ENCODE measurements at regions of chr20 and their contacts with region 1.

Region 1: GRCh38 chr20:24992487-24993205 is at the start of gene APMAP:
- DNase-seq: peak; percentile 91
- H3K4me3 Mint-ChIP-seq: peak within 1 kb of the TSS; percentile 97
- H3K27ac Mint-ChIP-seq: peak within 1 kb of the TSS; percentile 97
- H3K4me1 Mint-ChIP-seq: peaks cover 60% of the 10 kb centered on the region
- H3K27me3 Mint-ChIP-seq: no peaks in the 10 kb centered on the region
- CTCF ChIP-seq: no peak
- total RNA-seq, gene APMAP: 75.3 and 104 TPM in 2 replicates

Region 2: DNA sequence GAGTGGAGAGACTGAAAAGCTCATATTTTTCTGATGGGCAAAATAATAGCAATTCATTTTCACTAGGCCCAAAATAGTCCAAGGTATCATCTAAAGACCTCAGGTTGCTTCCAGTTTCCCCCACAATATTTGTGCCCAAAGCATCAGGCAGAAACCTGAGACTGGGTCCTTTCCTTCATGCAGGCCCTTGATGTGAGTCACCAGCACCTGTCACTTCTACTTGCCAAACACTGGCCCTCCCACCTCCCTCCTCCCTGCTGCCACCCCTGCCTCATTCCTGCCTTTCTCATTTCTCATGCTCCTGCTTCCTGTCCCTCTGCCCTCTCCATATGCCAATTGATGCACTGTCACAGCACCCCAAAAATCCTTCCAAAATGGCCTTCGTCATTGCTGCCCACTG is 273.9 kb before region 1 on chr20:
- CTCF ChIA-PET with region 1: no interaction called
- POLR2A ChIA-PET with region 1: no interaction called
- intact Hi-C with region 1: no loop called
- DNase-seq: no peak
- H3K4me3 Mint-ChIP-seq: no peak overlapping the region
- H3K27ac Mint-ChIP-seq: no peak overlapping the region
- H3K4me1 Mint-ChIP-seq: no peaks in the 10 kb centered on the region
- H3K27me3 Mint-ChIP-seq: peaks cover 22% of the 10 kb centered on the region
- CTCF ChIP-seq: no peak

Region 3: DNA sequence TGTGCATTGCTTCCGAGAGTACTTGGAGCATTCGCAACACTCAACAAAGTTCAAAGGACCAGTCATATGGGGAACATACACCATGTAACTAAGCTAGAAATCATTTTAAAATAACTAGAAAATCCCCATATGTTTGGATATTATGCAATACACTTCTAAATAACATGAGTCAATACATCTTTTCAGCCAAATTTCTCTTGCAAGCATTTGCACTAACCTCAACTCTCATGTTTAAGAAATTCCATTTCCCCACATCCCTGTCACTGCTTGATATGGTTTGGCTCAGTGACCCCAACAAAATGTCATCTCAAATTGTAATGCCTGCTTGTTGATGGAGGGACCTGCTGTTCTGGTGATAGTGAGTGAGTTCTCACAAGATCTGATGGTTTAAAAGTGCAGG is 129.3 kb before region 1 on chr20:
- CTCF ChIA-PET with region 1: no interaction called
- POLR2A ChIA-PET with region 1: no interaction called
- intact Hi-C with region 1: no loop called
- DNase-seq: peak; percentile 37
- H3K4me3 Mint-ChIP-seq: no peak overlapping the region
- H3K27ac Mint-ChIP-seq: no peak overlapping the region
- H3K4me1 Mint-ChIP-seq: no peaks in the 10 kb centered on the region
- H3K27me3 Mint-ChIP-seq: peaks cover 12% of the 10 kb centered on the region
- CTCF ChIP-seq: no peak

Region 4: GRCh38 chr20:25009156-25010145 is 16.8 kb after region 1 on chr20:
- CTCF ChIA-PET with region 1: interaction called, 19 read pairs
- POLR2A ChIA-PET with region 1: interaction called, 10 read pairs
- intact Hi-C with region 1: no loop called
- DNase-seq: no peak
- H3K4me3 Mint-ChIP-seq: no peak overlapping the region
- H3K27ac Mint-ChIP-seq: no peak overlapping the region
- H3K4me1 Mint-ChIP-seq: no peaks in the 10 kb centered on the region
- H3K27me3 Mint-ChIP-seq: peaks cover 11% of the 10 kb centered on the region
- CTCF ChIP-seq: no peak

Region 5: GRCh38 chr20:25022687-25023086 is 30.0 kb after region 1 on chr20:
- CTCF ChIA-PET with region 1: interaction called, 19 read pairs
- POLR2A ChIA-PET with region 1: interaction called, 11 read pairs
- intact Hi-C with region 1: no loop called
- DNase-seq: peak; percentile 84
- H3K4me3 Mint-ChIP-seq: no peak overlapping the region
- H3K27ac Mint-ChIP-seq: no peak overlapping the region
- H3K4me1 Mint-ChIP-seq: peaks cover 17% of the 10 kb centered on the region
- H3K27me3 Mint-ChIP-seq: no peaks in the 10 kb centered on the region
- CTCF ChIP-seq: no peak

Region 6: DNA sequence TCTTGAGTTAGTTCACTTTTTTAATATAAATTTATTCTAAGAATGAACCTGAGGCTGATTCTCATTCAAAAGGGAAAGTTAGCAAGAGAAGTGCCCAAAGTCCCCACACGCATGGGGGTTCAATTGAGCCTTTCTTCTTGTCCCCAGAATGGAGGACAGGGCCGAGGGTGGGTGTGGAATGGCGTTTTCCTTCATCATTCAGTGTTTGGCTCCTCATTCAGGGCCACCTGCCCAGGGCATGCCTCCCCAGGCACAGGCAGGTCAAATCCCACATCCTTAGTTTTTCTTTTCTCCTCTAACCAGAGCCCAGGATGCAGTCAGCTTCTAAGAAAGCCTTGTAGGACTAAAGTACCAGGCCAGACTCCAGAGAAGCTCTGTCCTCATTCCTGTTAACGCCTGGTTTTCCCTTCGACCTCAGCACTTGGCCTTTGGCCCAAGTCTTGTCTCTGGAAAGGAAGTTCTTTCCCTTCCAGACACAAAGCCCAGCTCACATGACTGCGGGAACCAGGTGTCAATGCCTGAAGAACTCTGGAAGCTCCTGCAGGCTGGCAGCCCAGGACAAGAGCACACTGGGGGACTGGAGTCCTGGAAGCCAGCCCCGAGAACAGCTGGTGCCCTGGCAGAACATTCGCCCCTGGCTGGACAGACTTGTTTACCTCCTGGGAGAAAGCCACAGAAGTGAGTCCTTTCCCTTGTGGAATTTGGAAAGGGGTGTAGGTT is 46.9 kb after region 1 on chr20:
- CTCF ChIA-PET with region 1: interaction called, 43 read pairs
- POLR2A ChIA-PET with region 1: interaction called, 17 read pairs
- intact Hi-C with region 1: no loop called
- DNase-seq: peak; percentile 90
- H3K4me3 Mint-ChIP-seq: peak overlapping the region; percentile 25
- H3K27ac Mint-ChIP-seq: peak overlapping the region; percentile 81
- H3K4me1 Mint-ChIP-seq: peaks cover 20% of the 10 kb centered on the region
- H3K27me3 Mint-ChIP-seq: peaks cover 11% of the 10 kb centered on the region
- CTCF ChIP-seq: no peak

Region 7: GRCh38 chr20:25076731-25077609 is 84.3 kb after region 1 on chr20:
- CTCF ChIA-PET with region 1: interaction called, 40 read pairs
- POLR2A ChIA-PET with region 1: interaction called, 5 read pairs
- intact Hi-C with region 1: no loop called
- DNase-seq: peak; percentile 86
- H3K4me3 Mint-ChIP-seq: no peak overlapping the region
- H3K27ac Mint-ChIP-seq: no peak overlapping the region
- H3K4me1 Mint-ChIP-seq: peaks cover 13% of the 10 kb centered on the region
- H3K27me3 Mint-ChIP-seq: peaks cover 46% of the 10 kb centered on the region
- CTCF ChIP-seq: peak; percentile 34

Region 8: GRCh38 chr20:25310268-25310920 is 317.7 kb after region 1 on chr20:
- CTCF ChIA-PET with region 1: interaction called, 4 read pairs
- POLR2A ChIA-PET with region 1: interaction called, 12 read pairs
- intact Hi-C with region 1: no loop called
- DNase-seq: peak; percentile 91
- H3K4me3 Mint-ChIP-seq: peak overlapping the region; percentile 56
- H3K27ac Mint-ChIP-seq: peak overlapping the region; percentile 88
- H3K4me1 Mint-ChIP-seq: peaks cover 32% of the 10 kb centered on the region
- H3K27me3 Mint-ChIP-seq: no peaks in the 10 kb centered on the region
- CTCF ChIP-seq: peak; percentile 30

Region 9: DNA sequence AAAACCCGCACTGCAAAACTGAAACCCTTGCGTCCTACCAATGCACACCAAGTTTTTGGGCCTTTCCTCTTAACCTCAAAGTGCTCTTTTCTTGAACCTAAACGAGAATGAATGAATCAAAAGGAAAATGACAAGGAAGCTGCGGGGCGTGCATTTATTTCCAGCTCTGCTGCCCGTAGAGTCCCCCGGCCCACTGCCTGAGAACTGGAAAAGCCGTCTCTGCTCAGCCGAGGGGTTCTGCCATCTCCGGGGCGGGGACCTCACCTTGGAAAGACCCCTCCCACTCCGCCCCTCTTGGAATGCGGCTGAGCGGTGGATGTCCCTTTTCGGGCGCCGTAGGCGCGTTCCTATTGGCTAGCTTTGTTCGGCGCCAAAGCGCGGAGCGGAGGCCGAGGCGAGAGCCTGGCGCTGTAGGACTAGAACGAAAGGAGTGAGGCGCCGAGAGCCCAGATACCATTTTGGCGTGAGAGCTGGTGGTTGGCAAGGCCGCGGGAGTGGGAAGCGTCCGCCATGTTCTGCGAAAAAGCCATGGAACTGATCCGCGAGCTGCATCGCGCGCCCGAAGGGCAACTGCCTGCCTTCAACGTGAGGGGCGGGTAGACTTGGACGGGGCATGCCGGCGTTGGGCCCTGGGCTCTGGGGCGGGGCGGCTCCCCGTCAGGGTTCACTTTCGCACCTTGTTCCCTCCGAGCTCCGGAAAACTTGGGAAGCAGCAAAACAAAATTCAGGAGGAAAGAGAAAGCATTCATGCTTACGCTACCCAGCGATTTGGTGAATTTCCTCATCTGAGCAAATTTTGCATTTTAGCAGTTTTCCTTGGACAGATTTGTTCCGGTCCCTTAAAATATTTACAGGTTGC is 414.9 kb after region 1 on chr20 and contains the start of gene GINS1:
- CTCF ChIA-PET with region 1: interaction called, 18 read pairs
- POLR2A ChIA-PET with region 1: interaction called, 18 read pairs
- intact Hi-C with region 1: no loop called
- DNase-seq: peak; percentile 90
- H3K4me3 Mint-ChIP-seq: peak within 1 kb of the TSS; percentile 92
- H3K27ac Mint-ChIP-seq: peak within 1 kb of the TSS; percentile 69
- H3K4me1 Mint-ChIP-seq: peaks cover 15% of the 10 kb centered on the region
- H3K27me3 Mint-ChIP-seq: no peaks in the 10 kb centered on the region
- CTCF ChIP-seq: no peak
- total RNA-seq, gene GINS1: 5.2 and 6.0 TPM in 2 replicates